ENCODE measurements at regions of chr1 and their contacts with region 1.

Region 1: GRCh38 chr1:182781841-182782586 is 7.6 kb upstream of the NPL start:
- DNase-seq: peak in 1 of 2 experiments; percentile 83
- H3K4me3 ChIP-seq: no peak overlapping the region
- H3K27ac ChIP-seq: no peak overlapping the region
- H3K4me1 ChIP-seq: peaks cover 0 to 8% (median 3%) of the 10 kb centered on the region in 4 experiments; a peak in 2 of 7 replicates
- H3K27me3 ChIP-seq: no peaks in the 10 kb centered on the region
- CTCF ChIP-seq: peak; percentile 83 to 88 (median 85)
- EP300 ChIP-seq: no peak
- POLR2A ChIP-seq: no peak
- RAD21 ChIP-seq: peak; percentile 89 to 93

Region 2: DNA sequence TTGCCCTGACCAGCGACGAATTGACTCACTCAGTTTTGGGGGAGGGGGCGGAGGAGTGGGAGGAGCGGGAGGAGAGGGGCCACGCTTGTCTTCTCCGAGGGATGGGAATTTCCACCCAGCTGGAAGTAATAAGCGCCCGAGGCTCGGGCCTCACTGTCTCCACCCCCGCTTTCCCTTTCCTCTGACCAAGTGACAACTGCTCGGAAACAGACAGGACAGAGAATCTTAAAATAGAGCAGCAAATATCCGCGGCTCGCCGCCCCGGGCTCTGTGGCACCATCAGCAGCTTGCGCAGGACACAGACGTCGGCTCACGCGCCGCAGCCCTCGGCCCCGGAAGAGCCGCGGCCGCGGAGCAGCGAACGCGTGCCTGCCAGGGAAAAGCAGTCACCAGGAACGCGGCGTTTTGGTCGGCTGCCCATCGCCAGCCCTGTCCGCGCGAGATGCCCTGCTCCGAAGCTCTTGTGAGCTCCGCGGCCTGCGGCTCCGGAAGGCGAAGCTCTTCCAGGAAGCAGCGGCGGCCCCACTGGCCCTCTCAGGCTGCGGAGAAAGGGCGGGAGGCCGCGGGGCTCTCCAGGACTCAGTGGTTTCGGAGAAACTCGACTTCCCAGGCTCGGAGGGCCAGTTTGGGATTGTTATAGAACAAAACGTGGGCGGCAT is 167.1 kb before region 1 on chr1:
- CTCF ChIA-PET with region 1: interaction called, 1,131 read pairs
- POLR2A ChIA-PET with region 1: interaction called, 28 read pairs
- DNase-seq: peak in 1 of 2 experiments; percentile 75
- H3K4me3 ChIP-seq: peak overlapping the region; percentile 26 to 65 (median 52)
- H3K27ac ChIP-seq: peak overlapping the region; percentile 49; the same call in 1 of the 2 replicates
- H3K4me1 ChIP-seq: peaks cover 24 to 53% (median 31%) of the 10 kb centered on the region in 4 experiments
- H3K27me3 ChIP-seq: peaks cover 0 to 29% (median 14%) of the 10 kb centered on the region in 4 experiments; a peak in 6 of 7 replicates
- CTCF ChIP-seq: no peak
- EP300 ChIP-seq: no peak
- POLR2A ChIP-seq: no peak; a peak in 1 of 3 replicates
- RAD21 ChIP-seq: no peak

Region 3: DNA sequence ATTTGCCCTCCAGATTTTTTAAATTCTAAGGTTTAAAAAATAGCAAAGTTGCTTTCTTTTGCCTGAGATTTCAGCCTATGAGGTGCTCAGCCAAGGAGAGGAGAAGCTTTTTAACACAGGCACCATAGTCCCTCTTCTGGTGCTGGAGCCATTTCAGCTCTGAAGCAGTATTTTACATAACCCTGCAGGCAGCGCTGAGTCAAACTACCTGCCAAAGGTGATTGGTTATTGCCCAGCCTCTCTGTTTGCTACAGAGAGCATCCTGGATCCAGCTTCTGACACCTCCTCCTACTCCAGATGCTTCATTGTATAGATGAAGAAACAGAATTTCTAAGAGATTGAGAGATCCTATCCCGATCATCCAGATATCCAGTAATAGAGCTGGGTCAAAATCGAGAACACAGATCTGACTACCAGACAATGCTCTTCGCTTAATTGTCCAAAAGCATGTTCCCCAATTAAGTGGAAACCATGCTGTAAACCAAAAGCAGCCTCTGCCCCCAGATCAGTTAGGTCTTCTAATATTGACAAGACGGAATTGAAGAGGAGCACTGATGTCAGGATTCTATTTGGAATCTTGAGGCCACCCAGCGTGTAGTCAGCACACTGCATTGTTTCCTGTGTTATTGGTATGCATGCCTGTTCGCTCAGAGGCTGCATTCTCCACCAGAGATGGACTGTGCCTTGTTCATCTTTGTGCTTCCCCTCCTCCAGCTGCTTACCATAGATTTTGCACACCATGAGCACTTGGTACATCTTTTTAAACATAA is 119.7 kb before region 1 on chr1:
- CTCF ChIA-PET with region 1: interaction called, 89 read pairs
- POLR2A ChIA-PET with region 1: interaction called, 6 read pairs
- DNase-seq: no peak
- H3K4me3 ChIP-seq: peak overlapping the region in 1 of 4 experiments; percentile 35; a peak in 2 of 8 replicates
- H3K27ac ChIP-seq: no peak overlapping the region
- H3K4me1 ChIP-seq: peaks cover 5 to 21% (median 17%) of the 10 kb centered on the region in 4 experiments; a peak in 6 of 7 replicates
- H3K27me3 ChIP-seq: peaks cover 0 to 3% (median 0%) of the 10 kb centered on the region in 4 experiments; a peak in 2 of 7 replicates
- CTCF ChIP-seq: no peak
- EP300 ChIP-seq: no peak
- POLR2A ChIP-seq: no peak
- RAD21 ChIP-seq: no peak; a peak in 1 of 4 replicates

Region 4: DNA sequence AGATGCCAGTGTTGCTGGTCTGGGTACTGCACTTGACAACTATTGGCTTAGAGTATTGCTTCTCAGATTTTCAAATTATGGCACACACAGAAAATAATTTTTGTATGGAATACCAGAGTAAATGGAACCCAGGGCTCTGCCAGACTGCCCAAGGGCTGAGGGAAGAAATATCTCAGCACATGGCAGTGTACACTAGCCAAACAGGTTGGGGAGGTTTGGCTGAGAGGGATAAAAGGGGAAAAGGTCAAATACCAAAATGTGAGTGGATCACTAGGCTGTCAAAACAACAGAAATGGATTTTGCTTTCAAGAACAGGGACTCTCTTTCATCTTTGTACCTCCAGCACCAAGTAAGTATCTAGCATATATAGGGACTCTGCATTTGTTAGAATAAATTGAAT is 94.7 kb before region 1 on chr1:
- CTCF ChIA-PET with region 1: interaction called, 21 read pairs
- POLR2A ChIA-PET with region 1: no interaction called
- DNase-seq: no peak
- H3K4me3 ChIP-seq: no peak overlapping the region
- H3K27ac ChIP-seq: no peak overlapping the region
- H3K4me1 ChIP-seq: peaks cover 0 to 12% (median 4%) of the 10 kb centered on the region in 4 experiments; a peak in 6 of 7 replicates
- H3K27me3 ChIP-seq: peaks cover 0 to 19% (median 8%) of the 10 kb centered on the region in 4 experiments; a peak in 4 of 7 replicates
- CTCF ChIP-seq: no peak
- EP300 ChIP-seq: no peak
- POLR2A ChIP-seq: no peak
- RAD21 ChIP-seq: no peak

Region 5: GRCh38 chr1:182731852-182732545 is 50.0 kb before region 1 on chr1:
- CTCF ChIA-PET with region 1: interaction called, 11 read pairs
- POLR2A ChIA-PET with region 1: no interaction called
- DNase-seq: no peak
- H3K4me3 ChIP-seq: no peak overlapping the region
- H3K27ac ChIP-seq: no peak overlapping the region
- H3K4me1 ChIP-seq: no peaks in the 10 kb centered on the region
- H3K27me3 ChIP-seq: no peaks in the 10 kb centered on the region
- CTCF ChIP-seq: no peak
- EP300 ChIP-seq: no peak
- POLR2A ChIP-seq: no peak
- RAD21 ChIP-seq: no peak

Region 6: DNA sequence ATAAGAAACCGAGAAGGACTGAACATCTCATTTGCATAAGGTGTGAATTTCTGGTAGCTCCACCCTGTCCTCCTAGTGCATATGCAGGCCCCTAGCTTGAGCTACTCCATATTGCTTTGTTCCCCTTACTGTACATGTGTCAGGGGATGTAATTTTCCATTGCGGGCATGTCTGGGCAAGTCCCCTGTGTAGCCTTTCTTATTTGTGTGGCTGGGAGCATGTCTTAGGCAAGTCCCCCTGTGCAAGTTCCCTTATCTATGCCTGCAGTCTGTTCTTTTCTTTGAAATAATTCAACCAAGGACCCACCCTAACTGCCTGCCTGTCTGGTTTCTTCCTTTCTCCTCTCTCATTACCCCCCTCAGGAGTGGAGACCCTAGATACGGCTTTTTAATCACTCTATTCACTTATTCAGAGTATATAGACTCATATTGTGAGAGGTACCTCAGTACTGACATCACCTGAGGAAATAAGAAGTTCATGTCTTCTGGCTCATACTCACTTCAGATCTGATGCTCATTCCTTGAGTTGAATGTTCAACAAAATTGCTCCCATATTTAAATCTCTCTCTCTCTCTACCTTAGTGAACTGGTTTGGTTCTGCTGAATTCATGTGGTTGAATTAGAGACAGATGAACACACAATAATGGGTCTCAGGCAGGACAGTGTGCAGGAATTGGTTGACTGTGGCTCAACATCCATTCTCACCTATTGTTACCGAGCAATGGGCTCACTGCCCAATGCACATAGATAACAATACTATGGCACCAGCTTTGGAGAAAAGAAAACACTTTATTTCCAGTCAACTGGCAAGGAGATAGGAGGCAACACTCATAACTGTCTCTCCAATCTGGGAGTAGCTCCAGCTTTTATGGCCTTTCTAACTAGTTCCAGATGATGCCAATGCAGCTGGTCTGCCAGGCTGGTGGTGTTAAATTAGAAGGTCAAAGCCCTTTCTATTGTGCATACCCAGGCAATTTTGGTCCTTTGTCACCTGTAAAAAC is 20.3 kb before region 1 on chr1:
- CTCF ChIA-PET with region 1: interaction called, 48 read pairs
- POLR2A ChIA-PET with region 1: no interaction called
- DNase-seq: no peak
- H3K4me3 ChIP-seq: no peak overlapping the region
- H3K27ac ChIP-seq: no peak overlapping the region
- H3K4me1 ChIP-seq: no peaks in the 10 kb centered on the region
- H3K27me3 ChIP-seq: peaks cover 0 to 1% (median 0%) of the 10 kb centered on the region in 4 experiments; a peak in 1 of 7 replicates
- CTCF ChIP-seq: no peak
- EP300 ChIP-seq: no peak
- POLR2A ChIP-seq: no peak
- RAD21 ChIP-seq: no peak

Region 7: DNA sequence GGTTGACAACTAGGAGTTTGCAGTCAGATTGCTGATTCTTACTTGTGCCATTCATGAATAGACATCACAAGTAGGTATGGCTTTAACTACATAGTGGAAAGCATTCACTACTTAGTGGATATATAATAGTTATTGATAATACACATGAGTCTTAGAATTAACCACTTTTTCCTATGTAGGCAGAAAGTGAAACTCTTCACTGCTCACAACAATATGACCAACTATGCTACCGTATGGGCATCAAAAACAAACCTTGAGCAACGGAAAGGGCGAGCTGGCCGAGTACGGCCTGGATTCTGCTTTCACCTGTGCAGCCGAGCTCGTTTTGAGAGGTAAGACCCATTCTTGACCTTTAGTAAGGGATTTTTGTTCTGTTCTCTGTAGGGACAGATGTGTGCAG is 95.8 kb after region 1 on chr1:
- CTCF ChIA-PET with region 1: no interaction called
- POLR2A ChIA-PET with region 1: no interaction called
- DNase-seq: no peak
- H3K4me3 ChIP-seq: no peak overlapping the region
- H3K27ac ChIP-seq: no peak overlapping the region
- H3K4me1 ChIP-seq: no peaks in the 10 kb centered on the region
- H3K27me3 ChIP-seq: no peaks in the 10 kb centered on the region
- CTCF ChIP-seq: no peak
- EP300 ChIP-seq: no peak
- POLR2A ChIP-seq: no peak
- RAD21 ChIP-seq: no peak